GM12878 (cell line): ENCODE measurements at regions of chr6 and their contacts with region 1.

Region 1: DNA sequence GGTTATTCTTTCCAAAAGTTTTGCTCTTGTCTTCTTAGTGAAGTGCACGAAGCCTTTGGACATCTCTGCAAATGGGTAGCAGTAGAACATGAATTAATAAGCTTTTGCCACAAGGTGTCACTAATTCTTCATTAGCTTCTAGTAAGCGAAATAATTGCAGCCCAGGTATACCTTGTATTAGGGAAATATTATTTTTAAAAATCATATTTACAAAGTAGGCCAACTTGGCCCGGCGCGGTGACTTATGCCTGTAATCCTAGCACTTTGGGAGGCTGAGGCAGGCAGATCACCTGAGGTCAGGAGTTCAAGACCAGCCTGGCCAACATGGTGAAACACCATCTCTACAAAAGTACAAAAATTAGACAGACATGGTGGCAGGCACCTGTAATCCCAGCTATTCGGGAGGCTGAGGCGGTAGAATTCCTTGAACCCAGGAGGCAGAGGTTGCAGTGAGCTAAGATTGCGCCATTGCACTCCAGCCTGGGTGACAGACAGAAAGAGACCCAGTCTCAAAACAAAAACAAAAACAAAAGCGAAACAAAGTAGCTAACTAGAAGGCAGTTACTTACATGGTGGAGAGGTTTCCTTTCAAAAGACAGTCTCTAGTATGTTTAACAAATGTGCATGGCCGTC is 8.8 kb upstream of the RSPH3 start:
- DNase-seq: no peak
- ATAC-seq: peak; percentile 91
- H3K4me3 ChIP-seq: peak overlapping the region; percentile 60
- H3K27ac ChIP-seq: peak overlapping the region; percentile 58
- H3K4me1 ChIP-seq: no peaks in the 10 kb centered on the region
- H3K27me3 ChIP-seq: no peaks in the 10 kb centered on the region
- CTCF ChIP-seq: peak; percentile 50 to 70 (median 60); a peak in 5 of 6 replicates
- EP300 ChIP-seq: no peak
- POLR2A ChIP-seq: no peak
- RAD21 ChIP-seq: peak; percentile 78

Region 2: DNA sequence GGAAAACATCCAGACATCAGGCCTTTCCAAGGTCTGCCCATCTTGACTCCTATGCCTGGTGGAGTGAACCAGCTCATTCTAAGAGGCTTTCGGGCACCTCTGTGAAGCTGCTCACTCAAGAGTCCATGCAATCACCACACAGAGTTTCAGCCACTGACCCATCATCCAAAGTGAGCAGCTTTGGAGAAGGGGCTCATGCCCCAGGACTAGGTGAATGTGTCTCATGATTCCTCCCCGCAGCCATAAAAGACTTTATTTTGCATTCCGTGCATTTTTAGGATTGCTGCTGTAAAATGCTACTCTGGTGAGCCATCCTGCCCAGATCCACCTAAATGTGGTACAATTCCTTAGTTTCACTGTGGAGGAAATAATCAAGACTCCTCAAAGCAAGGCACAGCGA is 145.1 kb before region 1 on chr6:
- CTCF ChIA-PET with region 1: no interaction called
- POLR2A ChIA-PET with region 1: no interaction called
- RAD21 ChIA-PET with region 1: no interaction called
- SMC1A ChIA-PET with region 1: no interaction called
- in situ Hi-C with region 1: no loop called
- intact Hi-C with region 1: no loop called
- DNase-seq: no peak
- ATAC-seq: no peak
- H3K4me3 ChIP-seq: no peak overlapping the region
- H3K27ac ChIP-seq: no peak overlapping the region
- H3K4me1 ChIP-seq: peaks cover 26% of the 10 kb centered on the region
- H3K27me3 ChIP-seq: no peaks in the 10 kb centered on the region
- CTCF ChIP-seq: no peak
- EP300 ChIP-seq: no peak
- POLR2A ChIP-seq: no peak
- RAD21 ChIP-seq: no peak

Region 3: DNA sequence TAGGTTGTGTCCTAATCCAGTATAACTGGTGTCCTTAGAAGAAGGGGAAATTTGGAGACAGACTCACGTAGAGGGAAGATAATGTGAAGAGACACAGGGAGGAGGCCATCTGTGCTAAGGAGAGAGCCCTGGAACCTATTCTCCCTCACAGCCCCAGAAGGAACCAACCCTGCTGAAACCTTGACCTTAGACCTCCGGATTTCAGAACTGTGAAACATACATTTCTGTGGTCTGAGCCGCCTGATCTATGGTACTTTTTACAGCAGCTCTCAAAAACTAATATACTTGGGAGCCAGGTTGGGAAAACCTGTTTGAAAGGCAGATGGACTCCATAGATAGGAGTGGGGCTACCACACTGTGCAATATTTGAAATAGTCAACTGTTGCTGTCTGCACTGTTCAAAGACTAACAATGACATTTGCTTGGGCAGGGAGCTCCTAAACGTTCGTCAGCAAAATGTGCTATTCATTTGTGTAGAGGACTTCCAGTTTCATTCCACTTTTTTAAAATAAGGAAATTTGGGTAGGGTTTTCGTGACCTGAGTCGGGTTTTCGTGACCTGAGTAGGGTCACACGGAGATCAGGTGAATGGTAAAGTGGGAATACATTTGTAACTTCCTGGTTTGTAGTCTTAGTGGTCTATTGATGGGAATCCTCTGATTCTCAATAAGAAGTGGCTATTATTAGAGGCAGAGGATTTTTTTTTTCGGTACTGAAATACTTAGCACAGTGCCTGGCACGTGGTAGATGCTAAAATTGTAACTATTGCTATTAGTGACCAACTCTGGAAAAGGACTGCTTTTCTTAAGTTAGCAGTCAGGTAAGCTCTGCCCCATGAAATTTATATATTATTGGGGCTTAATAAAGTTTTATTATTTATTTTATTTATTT is 24.6 kb after region 1 on chr6:
- CTCF ChIA-PET with region 1: interaction called, 127 read pairs
- POLR2A ChIA-PET with region 1: interaction called, 5 read pairs
- RAD21 ChIA-PET with region 1: interaction called, 147 read pairs
- SMC1A ChIA-PET with region 1: interaction called, 194 read pairs
- in situ Hi-C with region 1: no loop called
- intact Hi-C with region 1: no loop called
- DNase-seq: no peak
- ATAC-seq: peak; percentile 50
- H3K4me3 ChIP-seq: no peak overlapping the region
- H3K27ac ChIP-seq: no peak overlapping the region
- H3K4me1 ChIP-seq: peaks cover 8% of the 10 kb centered on the region
- H3K27me3 ChIP-seq: no peaks in the 10 kb centered on the region
- CTCF ChIP-seq: no peak
- EP300 ChIP-seq: no peak
- POLR2A ChIP-seq: no peak
- RAD21 ChIP-seq: no peak

Region 4: GRCh38 chr6:159110013-159110412 is 101.2 kb after region 1 on chr6:
- CTCF ChIA-PET with region 1: interaction called, 631 read pairs
- POLR2A ChIA-PET with region 1: interaction called, 27 read pairs
- RAD21 ChIA-PET with region 1: interaction called, 259 read pairs
- SMC1A ChIA-PET with region 1: interaction called, 517 read pairs
- in situ Hi-C with region 1: loop called (anchors 5 kb)
- intact Hi-C with region 1: no loop called
- DNase-seq: no peak
- ATAC-seq: no peak
- H3K4me3 ChIP-seq: no peak overlapping the region
- H3K27ac ChIP-seq: no peak overlapping the region
- H3K4me1 ChIP-seq: peaks cover 36% of the 10 kb centered on the region
- H3K27me3 ChIP-seq: peaks cover 0 to 3% of the 10 kb centered on the region in 2 experiments; a peak in 1 of 4 replicates
- CTCF ChIP-seq: peak; percentile 66 to 88 (median 77)
- EP300 ChIP-seq: no peak
- POLR2A ChIP-seq: no peak
- RAD21 ChIP-seq: peak; percentile 82

Region 5: DNA sequence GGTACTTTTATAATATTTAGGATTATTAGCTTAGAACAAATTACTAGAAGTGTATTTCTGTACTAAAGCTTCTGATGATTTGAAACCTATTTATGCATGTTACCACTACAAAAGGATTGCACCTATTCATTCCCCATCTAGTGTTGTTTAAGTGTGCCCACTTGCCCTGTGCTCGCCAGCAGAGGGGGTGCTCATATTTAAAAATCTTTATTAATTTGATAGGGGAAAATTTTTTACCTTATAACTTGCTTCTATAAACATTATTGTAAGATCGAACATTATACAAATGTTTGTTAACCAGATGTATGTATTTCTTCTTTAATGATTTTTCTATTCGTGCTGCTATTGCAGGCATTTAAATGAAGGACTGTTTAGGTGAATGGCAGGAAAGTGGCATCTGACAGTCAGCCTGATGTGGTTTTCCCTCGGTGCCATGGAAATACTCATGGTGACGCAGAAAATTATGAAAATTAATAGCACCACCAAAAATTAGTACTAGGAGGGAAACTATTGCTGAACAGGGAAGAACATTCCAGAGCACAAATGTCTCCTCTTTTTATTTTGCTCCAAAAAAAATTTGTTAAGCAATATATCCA is 116.3 kb after region 1 on chr6:
- CTCF ChIA-PET with region 1: interaction called, 482 read pairs
- POLR2A ChIA-PET with region 1: interaction called, 6 read pairs
- RAD21 ChIA-PET with region 1: interaction called, 11 read pairs
- SMC1A ChIA-PET with region 1: interaction called, 20 read pairs
- in situ Hi-C with region 1: loop called (anchors 5 kb)
- intact Hi-C with region 1: no loop called
- DNase-seq: no peak
- ATAC-seq: no peak
- H3K4me3 ChIP-seq: no peak overlapping the region
- H3K27ac ChIP-seq: no peak overlapping the region
- H3K4me1 ChIP-seq: peaks cover 19% of the 10 kb centered on the region
- H3K27me3 ChIP-seq: peaks cover 0 to 3% of the 10 kb centered on the region in 2 experiments; a peak in 1 of 4 replicates
- CTCF ChIP-seq: 0 out of 6 replicates have a peak, but pooled peaks of 2 of the 3 experiments have one; percentile 5 to 9
- EP300 ChIP-seq: no peak
- POLR2A ChIP-seq: no peak
- RAD21 ChIP-seq: 0 out of 2 replicates have a peak, but pooled peaks have one; percentile 2

Region 6: DNA sequence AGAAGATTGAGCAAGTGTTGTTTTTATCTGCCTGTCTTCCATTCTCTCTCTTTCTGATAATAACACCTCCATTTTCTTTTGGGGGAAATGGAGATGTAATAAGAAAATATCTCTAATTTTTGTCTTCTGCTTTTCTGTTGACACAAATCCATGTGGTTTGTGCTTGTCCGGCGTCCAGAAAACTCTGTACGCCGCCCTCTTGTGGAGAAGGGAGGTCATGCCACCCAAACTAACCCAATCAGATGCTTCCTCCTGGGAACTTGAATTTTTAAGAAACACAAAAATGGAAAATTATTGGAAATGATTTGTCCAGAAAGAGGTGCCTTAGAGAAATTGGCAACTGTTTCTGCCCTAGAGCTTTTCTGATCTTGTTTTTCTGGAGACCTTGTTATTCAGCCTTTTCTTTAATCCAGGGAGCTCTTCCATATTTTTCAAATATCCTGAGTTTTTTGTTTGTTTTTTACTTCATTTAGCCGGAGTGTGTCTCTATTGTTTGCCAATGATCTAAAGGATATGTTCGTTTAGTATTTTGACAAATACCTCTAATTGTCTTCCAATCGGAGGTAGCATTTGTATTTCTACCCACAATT is 142.6 kb after region 1 on chr6:
- CTCF ChIA-PET with region 1: interaction called, 33 read pairs
- POLR2A ChIA-PET with region 1: no interaction called
- RAD21 ChIA-PET with region 1: interaction called, 4 read pairs
- SMC1A ChIA-PET with region 1: interaction called, 6 read pairs
- in situ Hi-C with region 1: no loop called
- intact Hi-C with region 1: no loop called
- DNase-seq: no peak
- ATAC-seq: peak; percentile 77
- H3K4me3 ChIP-seq: no peak overlapping the region
- H3K27ac ChIP-seq: no peak overlapping the region
- H3K4me1 ChIP-seq: no peaks in the 10 kb centered on the region
- H3K27me3 ChIP-seq: peaks cover 0 to 4% of the 10 kb centered on the region in 2 experiments; a peak in 1 of 4 replicates
- CTCF ChIP-seq: peak; percentile 66 to 83 (median 80)
- EP300 ChIP-seq: no peak
- POLR2A ChIP-seq: no peak
- RAD21 ChIP-seq: peak; percentile 47